ENCODE measurements at regions of chr2 and their contacts with region 1.

Region 1: DNA sequence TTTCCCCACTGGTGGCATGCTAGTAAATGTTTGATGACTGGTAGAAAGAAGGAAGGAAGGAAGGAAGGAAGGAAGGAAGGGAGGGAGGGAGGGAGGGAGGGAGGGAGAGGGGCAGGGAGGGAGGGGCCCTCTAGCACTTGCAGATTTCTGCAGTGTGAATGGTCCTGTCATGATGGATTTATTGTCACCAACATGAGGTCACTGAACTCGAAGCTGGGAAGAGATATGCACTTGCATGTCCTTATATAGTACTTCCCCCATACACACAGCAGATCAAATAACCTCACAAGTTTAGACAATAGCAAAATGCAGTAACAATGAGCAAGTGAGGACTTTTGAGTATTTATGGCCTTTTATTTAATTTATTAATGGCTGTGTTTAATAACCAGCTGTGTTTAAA is 44.5 kb upstream of the CXCR4 start:
- DNase-seq: no peak
- ATAC-seq: peak; percentile 40
- H3K4me3 ChIP-seq: no peak overlapping the region
- H3K4me3 Mint-ChIP-seq: peak overlapping the region in 2 of 10 donors; percentile 40 to 41
- H3K27ac ChIP-seq: no peak overlapping the region
- H3K27ac Mint-ChIP-seq: peak overlapping the region in 5 of 9 donors; percentile 0 to 88 (median 19)
- H3K4me1 ChIP-seq: no peaks in the 10 kb centered on the region
- H3K4me1 Mint-ChIP-seq: peaks cover 9 to 30% (median 23%) of the 10 kb centered on the region in 7 donors
- H3K27me3 ChIP-seq: no peaks in the 10 kb centered on the region
- H3K27me3 Mint-ChIP-seq: peaks cover 0 to 5% (median 0%) of the 10 kb centered on the region in 5 donors

Region 2: GRCh38 chr2:136151021-136151971 is 11.1 kb before region 1 on chr2:
- CTCF ChIA-PET with region 1: interaction called, 3 read pairs
- POLR2A ChIA-PET with region 1: interaction called, 5 read pairs
- intact Hi-C with region 1: loop called in 1 of 2 experiments (anchors 1 kb)
- DNase-seq: no peak
- ATAC-seq: no peak
- H3K4me3 ChIP-seq: no peak overlapping the region
- H3K4me3 Mint-ChIP-seq: peak overlapping the region in 1 of 10 donors; percentile 3
- H3K27ac ChIP-seq: no peak overlapping the region
- H3K27ac Mint-ChIP-seq: peak overlapping the region in 6 of 9 donors; percentile 16 to 68 (median 54)
- H3K4me1 ChIP-seq: peaks cover 0 to 3% of the 10 kb centered on the region in 2 donors
- H3K4me1 Mint-ChIP-seq: peaks cover 7 to 28% (median 19%) of the 10 kb centered on the region in 7 donors
- H3K27me3 ChIP-seq: no peaks in the 10 kb centered on the region
- H3K27me3 Mint-ChIP-seq: peaks cover 0 to 53% (median 0%) of the 10 kb centered on the region in 5 donors

Region 3: DNA sequence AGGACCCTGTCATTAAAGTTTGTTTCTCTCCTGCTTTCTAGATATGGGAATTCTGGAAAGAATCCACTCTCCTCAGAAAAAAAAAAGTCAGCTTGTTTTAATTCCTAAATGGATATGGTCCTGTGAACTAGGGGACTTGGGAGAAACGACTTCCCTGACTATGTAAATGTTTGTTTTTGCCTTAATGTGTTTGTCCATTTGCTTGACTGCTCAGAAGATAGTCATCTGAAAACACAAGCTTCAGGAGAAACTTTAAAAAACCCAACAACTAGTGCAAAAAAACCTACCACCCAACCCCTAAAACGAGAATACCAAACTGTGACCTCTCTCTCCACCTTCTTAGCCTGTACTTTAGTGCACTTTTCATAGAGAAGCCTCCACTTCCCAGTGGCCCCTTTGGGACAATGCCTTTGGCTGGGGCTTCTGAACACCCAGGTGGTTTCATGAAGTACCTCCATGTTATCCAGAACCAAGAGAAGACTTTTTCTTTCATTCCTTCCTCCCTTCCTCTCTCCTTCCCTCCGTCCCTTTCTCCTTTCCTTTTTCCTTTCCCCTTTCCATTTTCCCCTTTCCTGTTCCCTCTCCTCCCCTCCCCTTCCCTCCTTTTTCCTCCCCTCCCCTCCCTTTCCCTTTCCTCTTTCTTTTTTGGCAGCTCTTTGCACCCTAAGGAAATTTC is 14.4 kb after region 1 on chr2:
- CTCF ChIA-PET with region 1: no interaction called
- POLR2A ChIA-PET with region 1: no interaction called
- intact Hi-C with region 1: no loop called
- DNase-seq: no peak
- ATAC-seq: no peak
- H3K4me3 ChIP-seq: no peak overlapping the region
- H3K4me3 Mint-ChIP-seq: no peak overlapping the region
- H3K27ac ChIP-seq: no peak overlapping the region
- H3K27ac Mint-ChIP-seq: peak overlapping the region in 2 of 9 donors; percentile 13 to 25
- H3K4me1 ChIP-seq: peaks cover 6 to 9% of the 10 kb centered on the region in 2 donors
- H3K4me1 Mint-ChIP-seq: peaks cover 11 to 47% (median 28%) of the 10 kb centered on the region in 7 donors
- H3K27me3 ChIP-seq: no peaks in the 10 kb centered on the region
- H3K27me3 Mint-ChIP-seq: peaks cover 0 to 9% (median 0%) of the 10 kb centered on the region in 5 donors

Measured in naive thymus-derived CD4-positive, alpha-beta T cell (primary cell).